ENCODE measurements at regions of chr18 and their contacts with region 1.

Region 1: GRCh38 chr18:11980555-11981382 is 538 bp upstream of the IMPA2 start:
- DNase-seq: peak; percentile 98
- H3K4me3 Mint-ChIP-seq: peak overlapping the region; percentile 76
- H3K27ac Mint-ChIP-seq: peak overlapping the region; percentile 52
- H3K4me1 Mint-ChIP-seq: peaks cover 22% of the 10 kb centered on the region
- H3K27me3 Mint-ChIP-seq: peaks cover 5% of the 10 kb centered on the region

Region 2: GRCh38 chr18:11676867-11677266 is 303.9 kb before region 1 on chr18:
- CTCF ChIA-PET with region 1: no interaction called
- POLR2A ChIA-PET with region 1: no interaction called
- DNase-seq: no peak
- H3K4me3 Mint-ChIP-seq: no peak overlapping the region
- H3K27ac Mint-ChIP-seq: no peak overlapping the region
- H3K4me1 Mint-ChIP-seq: no peaks in the 10 kb centered on the region
- H3K27me3 Mint-ChIP-seq: peaks cover 23% of the 10 kb centered on the region

Region 3: GRCh38 chr18:11851146-11851805 is 129.5 kb before region 1 on chr18 and contains the start of gene CHMP1B:
- CTCF ChIA-PET with region 1: no interaction called
- POLR2A ChIA-PET with region 1: interaction called, 25 read pairs
- DNase-seq: peak; percentile 98
- H3K4me3 Mint-ChIP-seq: peak within 1 kb of the TSS; percentile 99
- H3K27ac Mint-ChIP-seq: peak within 1 kb of the TSS; percentile 99
- H3K4me1 Mint-ChIP-seq: peaks cover 29% of the 10 kb centered on the region
- H3K27me3 Mint-ChIP-seq: peaks cover 7% of the 10 kb centered on the region
- total RNA-seq, gene CHMP1B: 26.8 to 28.0 TPM

Region 4: GRCh38 chr18:11908182-11909060 is 72.3 kb before region 1 on chr18 and contains the start of gene MPPE1:
- CTCF ChIA-PET with region 1: no interaction called
- POLR2A ChIA-PET with region 1: interaction called, 30 read pairs
- DNase-seq: peak; percentile 89
- H3K4me3 Mint-ChIP-seq: peak within 1 kb of the TSS; percentile 86
- H3K27ac Mint-ChIP-seq: peak within 1 kb of the TSS; percentile 89
- H3K4me1 Mint-ChIP-seq: peaks cover 26% of the 10 kb centered on the region
- H3K27me3 Mint-ChIP-seq: no peaks in the 10 kb centered on the region
- total RNA-seq, gene MPPE1: 51.0 to 54.4 TPM

Region 5: GRCh38 chr18:11927497-11927896 is 53.3 kb before region 1 on chr18:
- CTCF ChIA-PET with region 1: no interaction called
- POLR2A ChIA-PET with region 1: no interaction called
- DNase-seq: no peak
- H3K4me3 Mint-ChIP-seq: no peak overlapping the region
- H3K27ac Mint-ChIP-seq: no peak overlapping the region
- H3K4me1 Mint-ChIP-seq: peaks cover 6% of the 10 kb centered on the region
- H3K27me3 Mint-ChIP-seq: no peaks in the 10 kb centered on the region

Region 6: DNA sequence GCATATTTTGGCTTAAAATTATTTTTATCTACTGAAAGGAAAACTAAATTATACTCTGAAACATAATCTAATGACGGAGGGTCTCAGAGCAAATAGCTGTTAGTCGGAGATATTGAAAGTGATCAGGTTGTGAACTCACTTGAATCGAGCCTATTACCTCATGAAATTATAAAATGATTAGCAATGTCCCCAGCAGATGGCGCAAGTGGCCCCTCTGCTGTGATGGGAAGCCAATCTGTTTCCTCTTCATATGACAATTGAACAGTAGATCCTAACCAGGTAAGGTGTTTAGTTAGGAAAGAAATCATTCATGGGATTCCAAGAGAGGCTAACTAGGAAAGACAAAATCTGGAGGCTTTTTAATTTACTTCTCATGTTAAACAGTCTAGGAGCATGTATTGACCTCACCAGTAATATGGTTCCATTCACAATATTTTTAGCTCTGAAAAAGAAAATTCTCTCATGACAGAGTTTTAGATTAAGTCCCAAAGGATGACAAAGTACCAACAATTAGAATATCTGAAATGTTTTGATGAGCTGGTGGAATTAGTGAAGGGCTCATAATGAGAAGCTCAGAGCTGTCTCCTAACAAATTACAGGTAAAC is 42.8 kb before region 1 on chr18:
- CTCF ChIA-PET with region 1: interaction called, 13 read pairs
- POLR2A ChIA-PET with region 1: interaction called, 3 read pairs
- DNase-seq: peak; percentile 76
- H3K4me3 Mint-ChIP-seq: no peak overlapping the region
- H3K27ac Mint-ChIP-seq: no peak overlapping the region
- H3K4me1 Mint-ChIP-seq: no peaks in the 10 kb centered on the region
- H3K27me3 Mint-ChIP-seq: no peaks in the 10 kb centered on the region

Region 7: DNA sequence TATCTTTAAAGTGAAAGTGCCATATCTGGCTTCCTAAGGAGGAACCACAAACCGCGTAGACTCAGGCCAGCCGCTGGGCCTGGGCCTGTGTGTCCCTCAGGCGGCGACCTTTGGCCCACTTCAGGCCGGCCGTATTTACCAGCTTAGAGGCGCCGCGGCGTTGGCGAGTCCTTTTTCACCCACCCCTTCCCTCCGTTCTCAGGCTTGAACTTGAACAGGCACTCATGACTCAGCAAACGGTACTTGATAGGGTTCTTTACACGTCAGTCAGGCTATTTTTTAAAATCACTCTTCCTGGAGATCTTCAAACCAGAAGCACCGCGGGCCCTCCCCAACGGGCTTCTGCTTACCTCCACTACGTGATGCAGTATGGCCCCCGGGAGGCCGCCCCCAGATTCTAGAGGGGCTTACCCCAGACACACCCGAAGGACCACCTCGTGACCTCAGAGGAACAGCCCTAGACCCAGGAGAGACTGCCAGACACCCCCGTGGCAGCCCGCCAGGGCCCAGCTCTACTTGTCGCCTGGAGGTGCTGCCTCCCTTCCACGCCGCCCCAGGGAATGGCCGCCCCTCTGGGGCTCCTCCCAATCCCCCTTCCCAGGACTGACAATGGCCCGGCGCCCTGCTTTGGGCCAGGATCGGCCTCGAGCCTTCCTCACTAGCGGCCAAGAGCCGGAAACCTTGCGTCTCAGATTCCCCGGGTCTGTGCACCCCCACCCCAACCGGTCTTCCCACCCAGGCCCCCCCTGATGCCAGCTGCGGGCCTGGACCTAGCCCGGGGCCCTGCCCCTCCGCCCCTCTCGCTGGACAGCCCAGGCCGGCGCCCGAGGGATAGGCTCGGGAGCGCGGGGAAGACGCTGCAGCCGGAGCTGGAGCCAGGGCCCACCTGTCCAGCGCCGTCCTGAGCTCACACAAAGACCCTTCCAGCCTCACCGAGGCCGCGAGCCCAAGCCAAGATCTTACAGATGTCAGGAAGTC is 33.3 kb before region 1 on chr18:
- CTCF ChIA-PET with region 1: no interaction called
- POLR2A ChIA-PET with region 1: interaction called, 21 read pairs
- DNase-seq: peak; percentile 56
- H3K4me3 Mint-ChIP-seq: peak overlapping the region; percentile 53
- H3K27ac Mint-ChIP-seq: peak overlapping the region; percentile 48
- H3K4me1 Mint-ChIP-seq: peaks cover 21% of the 10 kb centered on the region
- H3K27me3 Mint-ChIP-seq: no peaks in the 10 kb centered on the region

Measured in activated CD4-positive, alpha-beta memory T cell treated with anti-CD3 and anti-CD28 coated beads, Interleukin-2, amount 10 ng/mL, durations not matched to agents 7 days and 5 days (primary cell).